Naive thymus-derived CD4-positive, alpha-beta T cell (primary cell): ENCODE measurements at regions of chr12 and their contacts with region 1.

Region 1: DNA sequence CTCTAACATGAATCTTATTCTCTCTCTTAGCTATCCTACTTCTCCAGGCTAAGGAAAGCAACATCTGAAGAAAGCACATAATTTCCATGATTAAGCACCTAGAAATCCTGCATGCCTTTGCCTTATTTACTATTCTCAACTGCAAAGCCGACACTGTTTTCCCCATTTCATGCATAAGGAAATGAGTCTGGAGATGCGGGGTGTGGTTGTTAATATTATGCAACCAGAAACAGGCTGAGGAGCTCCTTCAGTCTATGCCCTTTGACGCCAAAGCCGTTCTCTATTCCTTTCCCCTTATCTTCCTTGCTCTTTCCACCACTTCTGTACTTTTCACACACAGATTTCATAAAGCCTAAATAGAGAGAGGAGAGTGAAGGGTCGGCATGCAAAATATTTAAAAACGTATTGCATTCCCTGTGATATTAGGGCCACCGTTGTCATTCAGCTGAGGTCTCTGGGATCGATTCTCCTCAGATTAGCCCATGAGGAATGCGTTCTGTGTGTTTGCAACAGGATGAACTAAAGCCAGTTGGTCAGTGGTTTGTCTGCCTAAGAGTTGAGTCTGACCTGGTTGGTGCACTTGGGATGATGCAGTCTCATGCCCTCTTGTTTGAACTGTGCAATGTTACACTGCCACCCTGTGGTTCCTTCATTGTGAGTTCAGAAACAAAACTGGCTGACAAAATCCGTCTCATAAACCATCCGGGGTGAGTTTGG is 53.1 kb upstream of the PLEKHG7 start:
- DNase-seq: peak; percentile 8 to 70 (median 58)
- ATAC-seq: peak; percentile 96
- H3K4me3 ChIP-seq: no peak overlapping the region
- H3K4me3 Mint-ChIP-seq: peak overlapping the region in 1 of 10 donors; percentile 21
- H3K27ac ChIP-seq: no peak overlapping the region
- H3K27ac Mint-ChIP-seq: peak overlapping the region in 6 of 9 donors; percentile 7 to 79 (median 20)
- H3K4me1 ChIP-seq: no peaks in the 10 kb centered on the region
- H3K4me1 Mint-ChIP-seq: peaks cover 4 to 11% (median 6%) of the 10 kb centered on the region in 7 donors
- H3K27me3 ChIP-seq: no peaks in the 10 kb centered on the region
- H3K27me3 Mint-ChIP-seq: no peaks in the 10 kb centered on the region

Region 2: DNA sequence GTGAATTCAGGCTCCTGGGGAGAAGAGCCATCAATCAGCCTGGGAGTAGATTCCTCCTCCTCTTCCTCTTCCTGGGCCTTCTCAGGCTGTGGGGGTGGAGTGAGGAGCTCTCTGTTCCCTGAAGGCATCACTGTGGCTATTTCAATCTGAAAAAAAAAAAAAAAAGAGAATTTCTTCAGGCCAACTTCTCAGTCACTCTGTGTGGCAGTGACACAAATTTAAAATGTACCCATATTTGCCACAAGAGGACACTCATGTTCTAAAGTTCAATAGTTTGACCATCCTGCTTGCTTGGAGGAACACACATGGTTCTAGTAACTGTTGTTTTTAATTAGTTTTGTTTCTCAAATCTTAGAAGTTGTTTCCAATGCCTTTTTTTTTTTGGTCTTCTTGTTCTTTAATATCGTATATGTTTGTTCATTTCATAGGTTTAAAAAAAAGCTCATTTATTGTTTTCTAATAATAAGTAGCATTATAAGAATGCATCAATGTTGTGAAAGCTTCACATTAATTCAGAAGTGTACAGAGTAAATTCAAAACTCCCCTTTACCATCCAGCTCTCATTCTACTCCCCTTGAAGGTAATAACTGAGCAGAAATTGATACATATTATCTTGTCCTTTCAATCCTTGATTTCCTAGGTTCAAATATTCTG is 1671.4 kb before region 1 on chr12:
- CTCF ChIA-PET with region 1: no interaction called
- POLR2A ChIA-PET with region 1: no interaction called
- intact Hi-C with region 1: loop called in 1 of 2 experiments (anchors 1 kb)
- DNase-seq: peak in 1 of 9 donors; percentile 7
- ATAC-seq: peak; percentile 59
- H3K4me3 ChIP-seq: no peak overlapping the region
- H3K4me3 Mint-ChIP-seq: no peak overlapping the region
- H3K27ac ChIP-seq: no peak overlapping the region
- H3K27ac Mint-ChIP-seq: no peak overlapping the region
- H3K4me1 ChIP-seq: no peaks in the 10 kb centered on the region
- H3K4me1 Mint-ChIP-seq: no peaks in the 10 kb centered on the region
- H3K27me3 ChIP-seq: no peaks in the 10 kb centered on the region
- H3K27me3 Mint-ChIP-seq: peaks cover 0 to 19% (median 0%) of the 10 kb centered on the region in 5 donors

Region 3: GRCh38 chr12:91577586-91578539 is 1071.8 kb before region 1 on chr12:
- CTCF ChIA-PET with region 1: interaction called, 4 read pairs
- POLR2A ChIA-PET with region 1: no interaction called
- intact Hi-C with region 1: loop called (anchors 1 kb)
- DNase-seq: peak in 6 of 9 donors; percentile 30 to 53 (median 39)
- ATAC-seq: peak; percentile 88
- H3K4me3 ChIP-seq: peak overlapping the region; percentile 39
- H3K4me3 Mint-ChIP-seq: peak overlapping the region; percentile 16 to 93 (median 84)
- H3K27ac ChIP-seq: no peak overlapping the region
- H3K27ac Mint-ChIP-seq: peak overlapping the region; percentile 14 to 94 (median 81)
- H3K4me1 ChIP-seq: peaks cover 0 to 5% of the 10 kb centered on the region in 2 donors
- H3K4me1 Mint-ChIP-seq: peaks cover 12 to 36% (median 19%) of the 10 kb centered on the region in 7 donors
- H3K27me3 ChIP-seq: no peaks in the 10 kb centered on the region
- H3K27me3 Mint-ChIP-seq: peaks cover 0 to 3% (median 0%) of the 10 kb centered on the region in 5 donors

Region 4: GRCh38 chr12:91991399-91992187 is 658.1 kb before region 1 on chr12:
- CTCF ChIA-PET with region 1: no interaction called
- POLR2A ChIA-PET with region 1: no interaction called
- intact Hi-C with region 1: loop called (anchors 1 kb)
- DNase-seq: peak in 5 of 9 donors; percentile 22 to 64 (median 48)
- ATAC-seq: peak; percentile 83
- H3K4me3 ChIP-seq: no peak overlapping the region
- H3K4me3 Mint-ChIP-seq: peak overlapping the region in 5 of 10 donors; percentile 18 to 50 (median 32)
- H3K27ac ChIP-seq: peak overlapping the region; percentile 26
- H3K27ac Mint-ChIP-seq: peak overlapping the region in 7 of 9 donors; percentile 8 to 92 (median 70)
- H3K4me1 ChIP-seq: peaks cover 9 to 27% of the 10 kb centered on the region in 2 donors
- H3K4me1 Mint-ChIP-seq: peaks cover 9 to 92% (median 79%) of the 10 kb centered on the region in 7 donors
- H3K27me3 ChIP-seq: no peaks in the 10 kb centered on the region
- H3K27me3 Mint-ChIP-seq: no peaks in the 10 kb centered on the region

Region 5: DNA sequence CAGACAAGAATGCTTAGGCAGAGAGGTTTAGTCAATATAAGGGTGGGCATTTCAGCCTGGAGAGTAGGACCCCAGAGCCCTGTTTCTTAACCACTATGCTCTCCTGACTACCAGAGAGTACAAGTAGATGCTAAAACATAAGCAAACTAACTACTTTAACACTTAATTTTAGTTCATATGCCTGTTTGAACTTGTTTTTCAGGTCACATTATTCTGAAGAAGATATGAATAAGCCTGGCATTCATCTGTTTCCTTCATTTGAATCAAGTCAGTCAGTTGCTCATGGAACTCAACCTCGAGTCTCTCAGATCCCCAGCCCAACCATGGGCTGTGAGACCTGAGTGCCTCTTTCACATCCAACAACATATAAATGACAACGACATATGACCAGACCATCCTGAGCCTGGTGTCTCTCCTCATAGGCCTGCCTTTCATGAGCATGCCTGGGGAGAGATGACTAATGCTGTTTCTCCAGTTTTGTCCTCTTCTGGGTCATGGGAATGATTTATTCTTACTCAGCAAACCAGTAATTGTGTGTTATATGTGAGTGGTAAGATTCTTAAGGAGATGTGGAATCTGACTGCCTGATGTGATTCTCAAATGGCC is 252.9 kb before region 1 on chr12:
- CTCF ChIA-PET with region 1: no interaction called
- POLR2A ChIA-PET with region 1: no interaction called
- intact Hi-C with region 1: loop called in 1 of 2 experiments (anchors 5 kb)
- DNase-seq: no peak
- ATAC-seq: no peak
- H3K4me3 ChIP-seq: no peak overlapping the region
- H3K4me3 Mint-ChIP-seq: peak overlapping the region in 8 of 10 donors; percentile 9 to 76 (median 62)
- H3K27ac ChIP-seq: peak overlapping the region; percentile 85
- H3K27ac Mint-ChIP-seq: peak overlapping the region; percentile 90 to 100 (median 98)
- H3K4me1 ChIP-seq: peaks cover 76 to 84% of the 10 kb centered on the region in 2 donors
- H3K4me1 Mint-ChIP-seq: peaks cover 56 to 100% (median 93%) of the 10 kb centered on the region in 7 donors
- H3K27me3 ChIP-seq: no peaks in the 10 kb centered on the region
- H3K27me3 Mint-ChIP-seq: no peaks in the 10 kb centered on the region

Region 6: DNA sequence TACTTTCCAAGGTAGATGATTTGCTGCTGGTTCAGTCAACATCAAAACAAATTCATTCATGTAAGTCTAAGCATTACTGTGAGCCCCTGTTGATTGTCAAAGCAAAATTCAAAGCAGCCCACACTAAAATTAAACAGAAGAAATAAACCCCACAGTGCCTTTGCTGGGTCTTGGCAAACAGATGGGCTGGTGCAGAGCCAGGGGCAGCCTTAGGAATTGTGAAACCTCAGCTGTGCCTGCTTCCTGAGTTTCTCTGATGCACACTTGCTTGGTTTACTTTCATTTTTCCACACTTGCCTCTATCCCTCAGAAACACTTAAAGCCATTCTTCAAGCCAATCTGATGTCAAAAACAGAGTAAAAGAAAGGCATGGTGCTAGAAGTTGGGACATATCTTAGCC is 46.5 kb after region 1 on chr12:
- CTCF ChIA-PET with region 1: no interaction called
- POLR2A ChIA-PET with region 1: no interaction called
- intact Hi-C with region 1: no loop called
- DNase-seq: no peak
- ATAC-seq: no peak
- H3K4me3 ChIP-seq: no peak overlapping the region
- H3K4me3 Mint-ChIP-seq: no peak overlapping the region
- H3K27ac ChIP-seq: no peak overlapping the region
- H3K27ac Mint-ChIP-seq: no peak overlapping the region
- H3K4me1 ChIP-seq: no peaks in the 10 kb centered on the region
- H3K4me1 Mint-ChIP-seq: no peaks in the 10 kb centered on the region
- H3K27me3 ChIP-seq: no peaks in the 10 kb centered on the region
- H3K27me3 Mint-ChIP-seq: no peaks in the 10 kb centered on the region